Endothelial cell of umbilical vein (primary cell): ENCODE measurements at regions of chr13 and their contacts with region 1.

Region 1: GRCh38 chr13:102596147-102597028 is at the start of gene TPP2:
- DNase-seq: peak; percentile 99
- H3K4me3 ChIP-seq: peak within 1 kb of the TSS; percentile 92 to 99 (median 97)
- H3K27ac ChIP-seq: peak within 1 kb of the TSS; percentile 94
- H3K4me1 ChIP-seq: peaks cover 32% of the 10 kb centered on the region
- H3K27me3 ChIP-seq: no peaks in the 10 kb centered on the region
- CTCF ChIP-seq: no peak
- POLR2A ChIP-seq: peak; percentile 84
- total RNA-seq, gene TPP2: 46.7 TPM in 2 replicates

Region 2: GRCh38 chr13:102548811-102549210 is 47.6 kb before region 1 on chr13:
- CTCF ChIA-PET with region 1: no interaction called
- POLR2A ChIA-PET with region 1: no interaction called
- dilution Hi-C with region 1: no loop called
- intact Hi-C with region 1: no loop called
- DNase-seq: no peak
- H3K4me3 ChIP-seq: no peak overlapping the region
- H3K27ac ChIP-seq: no peak overlapping the region
- H3K4me1 ChIP-seq: no peaks in the 10 kb centered on the region
- H3K27me3 ChIP-seq: peaks cover 2 to 3% of the 10 kb centered on the region in 2 experiments
- CTCF ChIP-seq: no peak
- POLR2A ChIP-seq: no peak

Region 3: DNA sequence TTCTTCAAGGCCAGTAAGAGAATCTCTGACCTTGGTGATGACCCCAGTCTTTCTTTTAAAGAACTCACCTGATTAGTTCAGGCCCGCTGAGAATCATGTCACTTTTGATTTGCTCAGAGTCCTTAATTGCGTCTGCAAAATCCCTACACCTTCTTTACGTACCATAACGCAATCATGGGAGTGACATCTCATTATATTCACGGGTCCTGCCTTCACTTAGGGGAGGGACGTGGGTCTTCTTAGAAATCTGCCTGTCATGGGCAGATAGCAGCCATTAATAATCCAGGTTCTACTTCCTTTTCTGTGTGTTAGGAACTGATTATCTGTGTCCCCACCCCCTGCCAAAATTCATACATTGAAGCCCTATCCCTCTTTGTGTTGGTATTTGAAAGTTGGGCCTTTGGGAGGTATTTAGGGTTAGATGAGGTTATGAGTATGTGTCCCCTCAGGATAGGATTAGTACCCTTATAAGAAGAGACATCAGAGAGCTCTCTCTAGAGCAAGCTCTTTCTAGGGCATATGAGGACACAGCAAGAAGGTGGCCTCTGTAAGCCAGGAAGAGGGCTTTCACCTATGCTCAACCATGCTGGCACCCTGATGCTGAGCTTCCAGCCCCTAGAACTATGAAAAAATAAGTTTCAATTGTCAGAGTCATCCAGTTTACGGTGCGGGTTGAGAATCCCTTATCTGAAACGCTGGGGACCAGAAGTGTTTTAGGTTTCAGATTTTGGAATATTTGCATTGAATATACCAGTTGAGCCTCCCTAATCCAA is 10.3 kb after region 1 on chr13:
- CTCF ChIA-PET with region 1: interaction called, 15 read pairs
- POLR2A ChIA-PET with region 1: interaction called, 6 read pairs
- dilution Hi-C with region 1: no loop called
- intact Hi-C with region 1: no loop called
- DNase-seq: no peak
- H3K4me3 ChIP-seq: no peak overlapping the region
- H3K27ac ChIP-seq: no peak overlapping the region
- H3K4me1 ChIP-seq: peaks cover 3% of the 10 kb centered on the region
- H3K27me3 ChIP-seq: no peaks in the 10 kb centered on the region
- CTCF ChIP-seq: no peak
- POLR2A ChIP-seq: no peak

Region 4: GRCh38 chr13:102651892-102652291 is 55.5 kb after region 1 on chr13:
- CTCF ChIA-PET with region 1: interaction called, 5 read pairs
- POLR2A ChIA-PET with region 1: no interaction called
- dilution Hi-C with region 1: no loop called
- intact Hi-C with region 1: loop called (anchors 2 kb)
- DNase-seq: no peak
- H3K4me3 ChIP-seq: no peak overlapping the region
- H3K27ac ChIP-seq: no peak overlapping the region
- H3K4me1 ChIP-seq: peaks cover 21% of the 10 kb centered on the region
- H3K27me3 ChIP-seq: no peaks in the 10 kb centered on the region
- CTCF ChIP-seq: no peak
- POLR2A ChIP-seq: no peak

Region 5: GRCh38 chr13:102707465-102707864 is 111.1 kb after region 1 on chr13:
- CTCF ChIA-PET with region 1: interaction called, 14 read pairs
- POLR2A ChIA-PET with region 1: no interaction called
- dilution Hi-C with region 1: no loop called
- intact Hi-C with region 1: loop called (anchors 1 kb)
- DNase-seq: peak; percentile 93
- H3K4me3 ChIP-seq: no peak overlapping the region
- H3K27ac ChIP-seq: peak overlapping the region; percentile 59
- H3K4me1 ChIP-seq: peaks cover 48% of the 10 kb centered on the region
- H3K27me3 ChIP-seq: no peaks in the 10 kb centered on the region
- CTCF ChIP-seq: no peak
- POLR2A ChIP-seq: no peak

Region 6: GRCh38 chr13:102773441-102774215 is 177.2 kb after region 1 on chr13 and contains the start of gene TEX30:
- CTCF ChIA-PET with region 1: interaction called, 29 read pairs
- POLR2A ChIA-PET with region 1: interaction called, 3 read pairs
- dilution Hi-C with region 1: no loop called
- intact Hi-C with region 1: loop called (anchors 1 kb)
- DNase-seq: peak; percentile 90
- H3K4me3 ChIP-seq: peak within 1 kb of the TSS; percentile 85 to 94 (median 88)
- H3K27ac ChIP-seq: peak within 1 kb of the TSS; percentile 76
- H3K4me1 ChIP-seq: peaks cover 18% of the 10 kb centered on the region
- H3K27me3 ChIP-seq: no peaks in the 10 kb centered on the region
- CTCF ChIP-seq: peak in 1 of 2 donors; percentile 10
- POLR2A ChIP-seq: peak; percentile 97
- total RNA-seq, gene TEX30: 14.5 and 19.8 TPM in 2 replicates

Region 7: DNA sequence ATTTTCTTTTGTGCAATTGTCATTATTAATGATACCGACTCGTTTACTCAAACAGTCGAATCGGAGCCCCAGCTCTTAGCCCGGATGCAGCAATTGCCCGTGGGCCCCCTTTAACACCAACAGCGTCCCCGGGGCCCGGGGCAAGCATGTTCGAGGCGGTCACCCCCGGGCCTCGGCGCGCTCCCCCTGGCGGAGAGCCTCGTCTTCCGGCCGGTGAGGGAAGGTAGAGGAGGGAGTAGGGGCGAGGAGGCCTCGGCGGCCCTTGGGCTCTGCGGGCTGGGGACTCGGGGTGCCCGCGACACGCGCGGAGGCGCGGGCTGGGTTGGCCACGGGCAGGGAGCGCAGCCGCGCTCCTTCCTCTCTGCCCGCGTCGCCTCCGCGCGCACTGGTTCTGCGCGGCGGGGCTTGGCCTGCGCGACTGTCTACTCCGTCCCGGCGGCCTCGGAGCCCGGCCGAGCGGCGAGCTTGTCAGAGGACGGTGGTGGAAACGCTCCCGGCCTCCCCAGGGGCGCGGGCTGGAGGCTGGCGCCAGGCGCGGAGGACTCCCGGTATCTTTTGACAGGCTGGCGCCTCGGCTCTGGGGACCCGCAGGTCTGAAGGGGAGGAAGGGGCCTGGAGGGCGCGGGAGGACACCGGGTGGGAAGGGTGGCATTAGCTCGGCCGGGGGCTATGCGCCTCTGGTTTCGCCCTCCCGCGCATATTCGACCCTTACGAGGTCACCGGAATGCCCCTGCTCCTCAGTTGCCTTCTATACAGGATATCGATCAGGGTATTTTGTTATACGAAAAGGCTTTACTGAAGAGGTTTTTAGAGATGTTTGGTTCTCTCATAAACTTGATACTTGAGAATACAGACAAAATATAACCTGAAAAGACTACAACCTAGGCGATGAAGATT is 204.0 kb after region 1 on chr13:
- CTCF ChIA-PET with region 1: interaction called, 37 read pairs
- POLR2A ChIA-PET with region 1: no interaction called
- dilution Hi-C with region 1: no loop called
- intact Hi-C with region 1: loop called (anchors 1 kb)
- DNase-seq: peak; percentile 79
- H3K4me3 ChIP-seq: peak overlapping the region; percentile 47 to 71 (median 56)
- H3K27ac ChIP-seq: peak overlapping the region; percentile 41
- H3K4me1 ChIP-seq: peaks cover 18% of the 10 kb centered on the region
- H3K27me3 ChIP-seq: no peaks in the 10 kb centered on the region
- CTCF ChIP-seq: peak; percentile 76 to 85
- POLR2A ChIP-seq: no peak

Region 8: DNA sequence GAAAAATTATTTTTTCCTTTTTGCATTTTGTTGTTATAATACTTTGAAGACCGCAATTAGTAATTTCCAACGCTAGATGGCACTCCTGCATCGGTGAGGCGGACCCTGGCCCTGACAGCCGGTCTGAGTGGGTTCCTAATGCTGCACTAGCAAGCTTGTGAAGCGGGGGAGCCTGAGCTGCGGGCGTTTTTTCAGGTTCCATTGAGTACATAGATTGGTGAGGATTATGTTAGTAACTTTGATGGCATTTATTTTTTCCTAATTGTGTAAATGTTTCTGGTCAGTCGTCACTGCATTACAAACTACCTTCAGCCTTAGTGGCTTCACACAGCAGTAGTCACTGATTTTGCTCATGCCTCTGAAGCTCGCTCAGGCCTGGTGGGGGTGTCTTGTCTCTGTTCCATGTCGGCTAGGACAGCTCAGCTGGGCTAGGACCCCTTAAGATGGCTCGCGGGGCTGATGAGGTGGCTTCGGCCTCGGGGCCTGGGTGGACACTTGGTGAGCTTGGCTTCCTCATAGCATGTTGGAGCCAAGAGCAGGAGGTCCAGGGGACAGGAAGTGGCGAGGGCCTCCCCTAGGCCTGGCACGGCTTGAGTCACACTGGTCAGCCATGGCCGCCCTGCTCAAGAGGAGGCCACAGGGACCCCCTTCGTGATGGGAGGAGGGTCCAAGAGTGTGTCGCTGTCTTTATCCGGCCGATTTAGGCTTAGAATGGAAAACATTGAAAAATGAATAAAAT is 274.5 kb after region 1 on chr13:
- CTCF ChIA-PET with region 1: interaction called, 6 read pairs
- POLR2A ChIA-PET with region 1: no interaction called
- dilution Hi-C with region 1: loop called (anchors 25 kb)
- intact Hi-C with region 1: no loop called
- DNase-seq: peak; percentile 55
- H3K4me3 ChIP-seq: no peak overlapping the region
- H3K27ac ChIP-seq: no peak overlapping the region
- H3K4me1 ChIP-seq: peaks cover 7% of the 10 kb centered on the region
- H3K27me3 ChIP-seq: no peaks in the 10 kb centered on the region
- CTCF ChIP-seq: peak; percentile 65 to 80
- POLR2A ChIP-seq: no peak